ENCODE measurements at regions of chr1 and their contacts with region 1.

Region 1: GRCh38 chr1:2412519-2413233 is at the start of gene PEX10:
- DNase-seq: peak; percentile 91
- ATAC-seq: peak; percentile 97
- H3K4me3 ChIP-seq: peak within 1 kb of the TSS; percentile 95
- H3K27ac ChIP-seq: peak within 1 kb of the TSS; percentile 84
- H3K4me1 ChIP-seq: peaks cover 12% of the 10 kb centered on the region
- H3K27me3 ChIP-seq: no peaks in the 10 kb centered on the region; the same call in 1 of the 2 replicates
- CTCF ChIP-seq: no peak
- POLR2A ChIP-seq: no peak; the same call in 1 of the 2 replicates
- RAD21 ChIP-seq: no peak
- total RNA-seq, gene PEX10: 18.9 and 19.7 TPM in 2 replicates

Region 2: GRCh38 chr1:2127187-2128145 is 285.2 kb before region 1 on chr1:
- CTCF ChIA-PET with region 1: no interaction called
- POLR2A ChIA-PET with region 1: no interaction called
- dilution Hi-C with region 1: no loop called
- in situ Hi-C with region 1: no loop called
- intact Hi-C with region 1: no loop called
- DNase-seq: no peak
- ATAC-seq: no peak
- H3K4me3 ChIP-seq: no peak overlapping the region
- H3K27ac ChIP-seq: no peak overlapping the region
- H3K4me1 ChIP-seq: peaks cover 4% of the 10 kb centered on the region
- H3K27me3 ChIP-seq: no peaks in the 10 kb centered on the region; the same call in 1 of the 2 replicates
- CTCF ChIP-seq: no peak
- POLR2A ChIP-seq: no peak
- RAD21 ChIP-seq: no peak

Region 3: GRCh38 chr1:2205191-2205952 is 207.3 kb before region 1 on chr1:
- CTCF ChIA-PET with region 1: no interaction called
- POLR2A ChIA-PET with region 1: interaction called, 10 read pairs
- dilution Hi-C with region 1: no loop called
- in situ Hi-C with region 1: no loop called
- intact Hi-C with region 1: no loop called
- DNase-seq: peak; percentile 92
- ATAC-seq: peak; percentile 88
- H3K4me3 ChIP-seq: peak overlapping the region; percentile 46
- H3K27ac ChIP-seq: peak overlapping the region; percentile 21; the same call in 1 of the 2 replicates
- H3K4me1 ChIP-seq: peaks cover 42% of the 10 kb centered on the region
- H3K27me3 ChIP-seq: no peaks in the 10 kb centered on the region
- CTCF ChIP-seq: no peak
- POLR2A ChIP-seq: no peak
- RAD21 ChIP-seq: no peak; the same call in 1 of the 2 replicates

Region 4: DNA sequence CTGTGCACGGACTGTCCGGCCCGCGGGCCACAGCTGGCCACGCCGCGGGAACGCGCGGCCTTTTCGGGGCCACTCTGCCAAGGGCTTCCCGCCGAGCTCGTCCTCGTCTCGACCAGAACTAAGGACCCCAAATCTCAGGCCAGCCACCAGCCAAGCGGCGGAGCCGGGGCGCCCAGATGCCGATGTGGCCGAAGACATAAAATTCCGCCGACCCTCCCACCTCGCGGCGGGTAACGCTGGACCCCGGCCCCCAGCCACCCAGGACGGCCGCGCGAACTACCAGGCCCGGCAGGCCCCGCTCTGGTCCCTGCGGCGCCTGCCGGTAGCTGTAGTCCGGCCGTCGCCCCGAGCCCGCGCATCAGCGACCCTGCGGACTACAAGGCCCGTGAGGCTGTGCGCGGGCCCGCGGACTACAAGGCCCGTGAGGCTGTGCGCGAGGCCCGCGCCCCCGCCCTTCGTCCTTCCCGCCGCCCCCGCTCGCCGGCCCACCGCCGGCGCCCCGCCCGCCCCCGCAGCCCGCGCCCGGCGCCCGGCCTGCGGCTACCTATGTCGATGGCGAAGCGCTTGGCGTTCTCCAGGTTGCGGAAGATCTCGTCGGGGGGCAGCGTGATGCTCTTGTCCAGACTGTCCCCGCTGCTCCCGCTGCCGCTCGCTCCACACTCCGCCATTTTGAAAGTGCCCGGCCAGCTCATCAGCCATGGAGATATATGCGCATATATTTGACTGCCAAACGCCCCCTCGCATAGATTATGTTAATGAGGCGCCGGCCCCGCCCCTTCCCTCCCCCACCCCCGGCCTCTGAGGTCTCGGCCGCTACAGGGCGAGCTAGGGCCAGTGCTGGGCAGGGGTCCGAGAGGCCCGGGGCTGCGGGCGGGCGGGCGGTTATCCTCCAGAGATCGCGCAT is 113.5 kb after region 1 on chr1 and contains the start of gene PANK4:
- CTCF ChIA-PET with region 1: no interaction called
- POLR2A ChIA-PET with region 1: no interaction called
- dilution Hi-C with region 1: no loop called
- in situ Hi-C with region 1: no loop called
- intact Hi-C with region 1: loop called (anchors 5 kb)
- DNase-seq: peak; percentile 93
- ATAC-seq: peak; percentile 96
- H3K4me3 ChIP-seq: peak within 1 kb of the TSS; percentile 99
- H3K27ac ChIP-seq: peak within 1 kb of the TSS; percentile 97
- H3K4me1 ChIP-seq: peaks cover 25% of the 10 kb centered on the region
- H3K27me3 ChIP-seq: peaks cover 21% of the 10 kb centered on the region; the same call in 1 of the 2 replicates
- CTCF ChIP-seq: no peak
- POLR2A ChIP-seq: peak; percentile 93
- RAD21 ChIP-seq: no peak
- total RNA-seq, gene PANK4: 14.0 and 15.3 TPM in 2 replicates

Region 5: GRCh38 chr1:2545759-2546514 is 133.3 kb after region 1 on chr1:
- CTCF ChIA-PET with region 1: no interaction called
- POLR2A ChIA-PET with region 1: no interaction called
- dilution Hi-C with region 1: no loop called
- in situ Hi-C with region 1: loop called (anchors 5 kb)
- intact Hi-C with region 1: no loop called
- DNase-seq: peak; percentile 66
- ATAC-seq: peak; percentile 65
- H3K4me3 ChIP-seq: peak overlapping the region; percentile 40
- H3K27ac ChIP-seq: no peak overlapping the region; the same call in 1 of the 2 replicates
- H3K4me1 ChIP-seq: peaks cover 10% of the 10 kb centered on the region
- H3K27me3 ChIP-seq: peaks cover 2% of the 10 kb centered on the region; the same call in 1 of the 2 replicates
- CTCF ChIP-seq: no peak
- POLR2A ChIP-seq: no peak
- RAD21 ChIP-seq: no peak

Region 6: DNA sequence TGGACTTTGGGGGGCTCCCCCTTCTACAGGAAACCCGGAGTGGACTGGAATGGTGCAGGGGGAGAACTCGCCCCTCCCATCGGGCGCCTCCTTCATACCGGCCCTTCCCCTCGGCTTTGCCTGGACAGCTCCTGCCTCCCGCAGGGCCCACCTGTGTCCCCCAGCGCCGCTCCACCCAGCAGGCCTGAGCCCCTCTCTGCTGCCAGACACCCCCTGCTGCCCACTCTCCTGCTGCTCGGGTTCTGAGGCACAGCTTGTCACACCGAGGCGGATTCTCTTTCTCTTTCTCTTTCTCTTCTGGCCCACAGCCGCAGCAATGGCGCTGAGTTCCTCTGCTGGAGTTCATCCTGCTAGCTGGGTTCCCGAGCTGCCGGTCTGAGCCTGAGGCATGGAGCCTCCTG is 143.6 kb after region 1 on chr1 and contains the start of gene TNFRSF14:
- CTCF ChIA-PET with region 1: no interaction called
- POLR2A ChIA-PET with region 1: no interaction called
- dilution Hi-C with region 1: no loop called
- in situ Hi-C with region 1: no loop called
- intact Hi-C with region 1: no loop called
- DNase-seq: peak; percentile 35
- ATAC-seq: peak; percentile 79
- H3K4me3 ChIP-seq: peak within 1 kb of the TSS; percentile 44
- H3K27ac ChIP-seq: peak within 1 kb of the TSS; percentile 36; the same call in 1 of the 2 replicates
- H3K4me1 ChIP-seq: no peaks in the 10 kb centered on the region
- H3K27me3 ChIP-seq: no peaks in the 10 kb centered on the region; the same call in 1 of the 2 replicates
- CTCF ChIP-seq: peak; percentile 7; the same call in 1 of the 2 replicates
- POLR2A ChIP-seq: no peak
- RAD21 ChIP-seq: no peak
- total RNA-seq, gene TNFRSF14: 1.3 and 1.7 TPM in 2 replicates

Region 7: DNA sequence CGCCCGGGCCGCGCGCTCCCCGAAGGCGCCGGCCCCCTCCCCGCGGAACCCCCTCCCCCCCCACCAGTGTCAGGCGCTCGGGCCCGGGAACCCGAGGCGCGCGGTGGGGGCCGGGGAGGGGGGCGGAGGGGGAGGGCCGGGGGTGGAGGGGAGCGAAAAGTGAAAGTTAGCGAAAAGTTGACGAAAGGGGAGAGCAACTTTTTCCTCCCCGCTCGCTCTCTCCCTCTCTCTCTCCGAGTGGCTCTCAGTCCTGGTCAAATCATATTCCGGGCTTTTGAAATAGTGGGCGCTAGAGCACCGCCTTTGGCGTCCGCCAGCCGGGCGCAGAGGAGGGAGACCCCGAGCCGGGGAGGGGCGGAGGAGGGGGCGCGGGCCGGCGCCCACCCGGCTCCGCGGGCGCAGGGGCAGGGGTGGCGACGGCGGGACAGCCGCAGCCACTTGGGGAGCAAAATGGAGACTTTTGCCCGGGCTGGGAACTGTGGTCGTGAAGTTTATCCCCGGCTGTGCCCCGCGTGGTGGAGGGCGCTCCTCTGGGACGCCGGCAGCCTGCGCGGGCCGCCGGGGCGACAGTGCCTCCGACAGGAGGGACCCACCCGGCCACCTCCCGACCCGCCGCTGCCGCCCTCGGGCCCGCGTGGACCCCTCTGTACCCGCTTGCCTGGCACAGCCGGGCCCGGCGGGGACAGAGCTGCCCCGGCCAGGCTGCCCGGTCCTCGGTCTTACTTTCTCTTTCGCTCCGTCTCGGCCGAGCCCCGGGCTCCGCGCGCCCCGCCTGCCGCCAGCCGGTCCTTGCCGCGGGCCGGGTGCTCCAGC is 657.0 kb after region 1 on chr1:
- CTCF ChIA-PET with region 1: no interaction called
- POLR2A ChIA-PET with region 1: no interaction called
- dilution Hi-C with region 1: no loop called
- in situ Hi-C with region 1: no loop called
- intact Hi-C with region 1: loop called (anchors 5 kb)
- DNase-seq: peak; percentile 19
- ATAC-seq: peak; percentile 77
- H3K4me3 ChIP-seq: peak overlapping the region; percentile 48
- H3K27ac ChIP-seq: no peak overlapping the region
- H3K4me1 ChIP-seq: peaks cover 2% of the 10 kb centered on the region; the same call in 1 of the 2 replicates
- H3K27me3 ChIP-seq: peaks cover 77% of the 10 kb centered on the region
- CTCF ChIP-seq: peak; percentile 41
- POLR2A ChIP-seq: no peak
- RAD21 ChIP-seq: peak; percentile 30

Region 8: DNA sequence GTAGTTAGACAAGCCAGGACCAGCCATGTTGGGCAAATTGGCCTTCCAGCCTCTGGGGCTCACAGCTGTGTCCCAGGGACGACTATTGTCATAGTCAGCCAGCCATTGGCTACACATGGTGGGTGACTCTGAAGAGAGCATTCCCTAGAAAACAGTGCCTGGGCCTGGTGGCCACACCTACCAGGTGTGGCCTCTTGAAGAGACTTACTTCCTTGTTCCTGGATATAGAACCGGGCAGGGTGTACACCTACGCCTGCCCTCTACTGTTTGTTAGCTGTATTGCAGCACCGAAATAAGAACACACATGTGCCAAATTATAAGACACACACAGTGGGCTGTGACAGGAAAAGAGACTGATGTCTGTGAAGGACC is 907.2 kb after region 1 on chr1:
- CTCF ChIA-PET with region 1: no interaction called
- POLR2A ChIA-PET with region 1: no interaction called
- dilution Hi-C with region 1: no loop called
- in situ Hi-C with region 1: loop called (anchors 25 kb)
- intact Hi-C with region 1: loop called (anchors 10 kb)
- DNase-seq: peak; percentile 49
- ATAC-seq: peak; percentile 83
- H3K4me3 ChIP-seq: no peak overlapping the region
- H3K27ac ChIP-seq: no peak overlapping the region
- H3K4me1 ChIP-seq: no peaks in the 10 kb centered on the region; the same call in 1 of the 2 replicates
- H3K27me3 ChIP-seq: peaks cover 2% of the 10 kb centered on the region; the same call in 1 of the 2 replicates
- CTCF ChIP-seq: peak; percentile 68
- POLR2A ChIP-seq: no peak
- RAD21 ChIP-seq: peak; percentile 75

Region 9: DNA sequence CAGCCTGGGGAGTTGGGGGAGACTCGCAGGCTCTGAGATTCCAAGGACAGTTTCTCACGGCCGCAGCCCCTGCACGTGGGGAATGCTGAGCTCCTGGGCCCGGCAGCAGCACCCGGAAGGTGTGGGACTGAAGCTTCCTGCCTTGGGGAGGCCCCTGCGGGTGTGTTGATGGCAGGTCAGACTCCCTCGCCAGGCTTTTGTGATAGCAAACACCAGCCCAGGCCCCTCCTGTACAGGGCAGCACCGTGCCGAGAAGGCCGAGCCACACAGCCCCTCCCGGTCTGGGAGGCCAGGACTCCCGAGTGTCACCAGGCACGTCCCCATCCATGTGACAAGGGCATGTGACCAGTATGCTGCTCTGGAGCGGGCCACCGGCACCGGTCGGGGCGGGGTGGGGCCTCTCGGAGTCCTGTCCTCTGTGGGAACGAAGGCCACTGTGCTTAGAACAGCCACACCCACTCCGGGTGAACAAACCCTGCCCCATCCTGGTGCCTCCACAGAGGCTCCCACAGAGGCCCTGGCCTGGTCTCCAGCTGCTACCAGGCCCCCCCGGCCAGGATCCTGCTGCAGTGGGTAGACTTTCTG is 1010.7 kb after region 1 on chr1:
- CTCF ChIA-PET with region 1: interaction called, 5 read pairs
- POLR2A ChIA-PET with region 1: interaction called, 3 read pairs
- dilution Hi-C with region 1: no loop called
- in situ Hi-C with region 1: loop called (anchors 5 kb)
- intact Hi-C with region 1: loop called (anchors 1 kb)
- DNase-seq: no peak
- ATAC-seq: no peak
- H3K4me3 ChIP-seq: no peak overlapping the region
- H3K27ac ChIP-seq: no peak overlapping the region
- H3K4me1 ChIP-seq: no peaks in the 10 kb centered on the region
- H3K27me3 ChIP-seq: peaks cover 9% of the 10 kb centered on the region; the same call in 1 of the 2 replicates
- CTCF ChIP-seq: no peak
- POLR2A ChIP-seq: no peak
- RAD21 ChIP-seq: no peak